Activated T-helper 1 cell treated with anti-CD3 and anti-CD28 coated beads, Interleukin-12 subunit alpha, Interleukin-12 subunit beta, Interleukin-2, Interleukin-4 antibody, amounts not matched to agents 30 ng/mL and 10 ng/mL and 1 ng/mL, durations not matched to agents 14 hours and 24 hours and 36 hours (primary cell): ENCODE measurements at regions of chr15 and their contacts with region 1.

Region 1: DNA sequence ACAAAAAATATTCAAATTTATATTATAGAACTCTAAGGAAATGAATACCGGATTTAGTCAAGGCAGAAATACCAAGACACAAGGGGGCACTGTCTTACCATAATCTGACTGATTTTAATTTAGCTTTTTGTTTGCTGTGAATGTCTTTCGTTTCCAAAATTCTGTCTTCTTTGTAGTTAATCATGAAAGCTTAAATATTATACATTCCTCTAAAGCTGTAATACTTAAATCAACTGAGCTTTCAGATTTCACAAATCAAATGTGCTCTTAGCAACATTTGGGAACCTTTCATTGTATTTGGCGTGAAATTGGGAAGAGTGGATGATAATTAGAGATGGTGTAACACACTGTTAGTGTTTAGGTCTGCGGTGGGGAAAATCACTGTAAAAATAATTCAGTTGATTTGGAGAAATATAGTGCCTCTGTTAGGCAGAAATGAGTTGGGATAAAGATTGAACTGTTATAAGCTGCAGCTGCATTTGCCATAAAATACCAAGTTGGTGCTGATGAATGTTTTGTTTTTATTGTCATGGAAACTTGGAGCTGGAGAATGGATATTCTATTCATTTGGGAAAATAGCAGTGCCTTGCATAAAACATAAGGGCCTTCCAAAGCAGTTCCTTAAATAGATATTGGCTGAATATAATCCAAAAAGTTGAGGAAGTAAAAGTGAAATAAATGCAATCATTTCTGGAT is 228.2 kb downstream of the TCF12 start:
- DNase-seq: no peak
- H3K4me3 Mint-ChIP-seq: no peak overlapping the region
- H3K27ac Mint-ChIP-seq: no peak overlapping the region
- H3K4me1 Mint-ChIP-seq: peaks cover 11% of the 10 kb centered on the region
- H3K27me3 Mint-ChIP-seq: no peaks in the 10 kb centered on the region

Region 2: GRCh38 chr15:57235873-57236272 is 89.2 kb after region 1 on chr15:
- intact Hi-C with region 1: no loop called
- DNase-seq: no peak
- H3K4me3 Mint-ChIP-seq: no peak overlapping the region
- H3K27ac Mint-ChIP-seq: no peak overlapping the region
- H3K4me1 Mint-ChIP-seq: no peaks in the 10 kb centered on the region
- H3K27me3 Mint-ChIP-seq: no peaks in the 10 kb centered on the region

Region 3: GRCh38 chr15:57527382-57528091 is 380.9 kb after region 1 on chr15:
- intact Hi-C with region 1: loop called (anchors 1 kb)
- DNase-seq: peak; percentile 7
- H3K4me3 Mint-ChIP-seq: no peak overlapping the region
- H3K27ac Mint-ChIP-seq: no peak overlapping the region
- H3K4me1 Mint-ChIP-seq: no peaks in the 10 kb centered on the region
- H3K27me3 Mint-ChIP-seq: peaks cover 14% of the 10 kb centered on the region